HepG2 (cell line): ENCODE measurements at regions of chr9 and their contacts with region 1.

Region 1: DNA sequence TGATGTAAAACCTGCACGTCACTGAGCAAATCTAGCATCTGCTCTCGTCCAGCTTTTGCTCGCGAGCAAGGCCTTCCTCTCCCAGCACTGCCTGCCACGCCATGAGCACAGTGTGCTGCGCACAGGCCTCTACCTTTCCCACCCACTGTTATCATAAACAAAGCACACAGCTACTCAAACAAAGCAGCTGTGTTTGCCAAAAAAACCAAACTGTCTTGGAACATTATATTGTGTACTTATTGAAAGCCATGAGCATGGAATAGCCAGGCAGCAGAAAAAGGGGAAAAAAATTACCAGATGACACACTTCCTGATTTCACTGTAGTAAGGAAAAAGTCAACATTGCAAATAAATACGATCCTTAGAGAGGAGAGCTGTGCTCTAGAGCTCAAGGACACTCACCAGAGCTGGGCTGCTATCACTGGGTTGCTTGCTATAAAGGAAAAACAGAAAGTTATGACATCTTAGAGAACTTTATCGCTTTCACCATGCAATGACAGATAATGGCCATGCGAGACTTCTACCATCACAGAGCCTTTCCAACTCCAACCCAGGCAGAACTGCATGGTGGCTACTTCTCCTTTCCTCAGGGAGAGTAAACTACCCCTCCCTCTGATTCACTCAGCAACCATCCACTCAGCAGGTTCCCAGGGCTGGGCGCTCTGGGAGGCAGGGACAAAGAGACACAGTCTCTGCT is 69.6 kb downstream of the EPB41L4B start:
- DNase-seq: peak; percentile 97
- ATAC-seq: peak; percentile 89
- H3K4me3 ChIP-seq: peak overlapping the region in 2 of 3 experiments; percentile 15 to 42; a peak in 3 of 6 replicates
- H3K27ac ChIP-seq: peak overlapping the region; percentile 90
- H3K4me1 ChIP-seq: peaks cover 62% of the 10 kb centered on the region
- H3K27me3 ChIP-seq: no peaks in the 10 kb centered on the region
- CTCF ChIP-seq: no peak
- EP300 ChIP-seq: peak in 1 of 2 experiments; percentile 81; a peak in 2 of 4 replicates
- POLR2A ChIP-seq: no peak
- RAD21 ChIP-seq: 0 out of 2 replicates have a peak, but pooled peaks have one; percentile 17

Region 2: DNA sequence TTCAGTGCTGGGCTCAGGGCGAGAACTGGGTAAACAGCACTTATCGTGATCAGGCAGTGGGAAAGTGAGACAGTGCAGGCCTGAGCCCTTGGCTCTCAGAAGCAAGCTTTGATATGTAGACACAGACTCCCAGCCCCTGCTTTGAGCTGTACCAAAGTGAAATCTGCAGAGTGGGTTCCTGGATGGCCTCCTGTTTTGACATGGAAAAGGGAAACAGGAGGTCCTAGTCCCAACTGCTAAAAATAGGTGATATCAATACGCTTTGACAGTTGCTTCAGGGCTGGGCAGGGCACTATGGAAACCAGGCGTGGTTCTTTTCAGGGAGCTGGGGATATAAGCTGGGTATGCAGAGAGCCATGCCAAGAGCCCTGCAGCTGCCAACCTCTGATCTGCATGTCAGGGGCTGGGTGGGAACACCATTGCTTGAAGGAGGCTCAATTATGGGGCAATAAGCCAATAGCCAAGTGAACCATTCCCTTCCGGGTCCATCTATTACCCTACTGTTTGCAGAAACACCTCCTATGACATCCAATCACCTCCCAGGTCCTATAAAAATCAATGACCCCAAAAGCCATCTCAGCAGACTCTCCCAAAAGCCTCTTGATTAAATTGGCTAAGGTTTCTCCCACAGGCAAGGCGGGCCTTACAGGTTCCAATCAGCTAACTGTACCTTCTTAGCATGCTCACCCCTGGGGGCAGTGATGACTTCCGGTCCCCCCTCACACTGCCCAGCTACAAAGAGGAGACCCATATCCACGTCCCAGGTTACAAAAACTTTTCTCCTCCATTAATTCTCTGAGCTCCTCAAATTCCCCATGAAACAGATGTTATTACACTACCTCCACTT is 23.9 kb after region 1 on chr9:
- CTCF ChIA-PET with region 1: no interaction called
- POLR2A ChIA-PET with region 1: interaction called, 4 read pairs
- in situ Hi-C with region 1: no loop called
- intact Hi-C with region 1: loop called (anchors 2 kb)
- DNase-seq: no peak
- ATAC-seq: no peak
- H3K4me3 ChIP-seq: no peak overlapping the region
- H3K27ac ChIP-seq: no peak overlapping the region
- H3K4me1 ChIP-seq: peaks cover 34% of the 10 kb centered on the region
- H3K27me3 ChIP-seq: no peaks in the 10 kb centered on the region
- CTCF ChIP-seq: no peak
- EP300 ChIP-seq: no peak
- POLR2A ChIP-seq: no peak
- RAD21 ChIP-seq: no peak

Region 3: DNA sequence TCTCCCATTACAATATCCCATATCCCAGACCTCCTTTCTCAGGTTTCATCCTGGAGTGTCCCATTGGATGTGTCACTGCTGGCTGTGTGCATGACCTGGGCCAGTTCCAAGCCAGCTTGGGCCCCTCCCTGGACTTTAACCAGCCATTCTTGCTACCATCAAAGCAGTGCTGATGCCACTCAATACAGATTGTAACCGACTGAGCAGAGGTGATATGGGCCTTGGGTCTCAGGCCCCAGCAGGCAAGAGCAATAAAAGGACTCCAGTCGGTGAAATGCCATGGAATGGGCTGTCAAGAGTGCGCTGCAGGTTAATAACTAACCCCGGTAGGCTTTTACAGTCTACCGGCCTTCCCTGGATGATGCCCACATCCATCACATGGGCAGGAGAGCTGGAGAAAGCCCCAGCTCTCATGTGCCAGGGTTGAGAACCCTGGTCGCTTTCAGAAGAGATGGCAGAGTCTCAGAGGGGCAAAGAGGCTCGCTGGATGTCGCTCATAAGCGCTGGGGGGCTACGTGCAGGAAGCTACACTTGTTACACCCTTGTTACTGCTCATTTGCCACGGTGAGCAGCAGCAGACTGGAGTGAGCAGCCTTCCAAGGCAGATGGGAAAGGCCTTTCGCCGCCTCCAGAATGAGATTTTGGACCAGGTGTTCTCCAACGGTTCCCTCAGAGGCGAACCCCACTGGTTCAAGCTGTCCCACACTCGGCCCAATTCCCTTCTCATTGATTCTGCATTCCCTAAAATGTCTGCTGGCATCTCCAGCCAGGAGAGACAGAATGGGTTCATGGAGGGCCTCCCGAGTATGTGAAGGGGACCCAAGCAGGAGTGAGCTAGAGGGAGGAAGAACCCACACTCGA is 56.4 kb after region 1 on chr9:
- CTCF ChIA-PET with region 1: no interaction called
- POLR2A ChIA-PET with region 1: interaction called, 17 read pairs
- in situ Hi-C with region 1: no loop called
- intact Hi-C with region 1: loop called (anchors 1 kb)
- DNase-seq: peak; percentile 94
- ATAC-seq: peak; percentile 99
- H3K4me3 ChIP-seq: peak overlapping the region in 2 of 3 experiments; percentile 23 to 60; a peak in 3 of 6 replicates
- H3K27ac ChIP-seq: peak overlapping the region; percentile 76
- H3K4me1 ChIP-seq: peaks cover 84% of the 10 kb centered on the region
- H3K27me3 ChIP-seq: no peaks in the 10 kb centered on the region
- CTCF ChIP-seq: no peak
- EP300 ChIP-seq: peak in 1 of 2 experiments; percentile 81; a peak in 2 of 4 replicates
- POLR2A ChIP-seq: peak in 1 of 2 experiments; percentile 62; a peak in 2 of 4 replicates
- RAD21 ChIP-seq: 0 out of 2 replicates have a peak, but pooled peaks have one; percentile 29

Region 4: DNA sequence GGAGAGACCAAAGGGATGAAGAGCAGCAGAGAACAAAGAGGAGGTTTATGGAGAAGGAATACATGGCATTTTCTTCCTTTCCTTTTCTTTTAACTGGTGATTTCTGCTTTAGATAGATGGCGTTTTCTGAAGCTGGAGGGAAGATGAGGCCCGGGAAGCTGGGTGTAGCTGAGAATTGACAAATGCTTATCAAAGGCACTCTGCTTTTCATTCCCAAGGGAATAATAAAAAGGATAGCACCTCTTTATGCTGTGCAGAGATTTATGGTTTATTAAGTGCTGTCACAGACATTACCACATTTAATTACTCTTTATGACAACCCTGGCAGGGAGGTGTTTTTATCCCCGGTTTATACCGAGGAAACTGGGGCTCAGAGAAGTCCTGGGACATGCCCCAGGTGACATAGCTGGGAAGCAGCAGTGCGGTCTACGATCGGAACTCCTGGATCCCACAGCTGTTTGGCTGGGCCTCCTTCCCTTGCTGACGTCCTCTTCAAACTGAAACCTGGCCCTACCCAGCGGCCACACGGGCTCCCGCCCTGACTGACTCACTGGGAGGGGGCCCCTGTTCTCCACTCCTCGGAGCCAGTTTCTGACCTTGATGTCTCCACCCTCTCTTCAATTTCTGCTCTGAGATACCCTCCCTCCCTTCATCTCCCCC is 77.9 kb after region 1 on chr9:
- CTCF ChIA-PET with region 1: no interaction called
- POLR2A ChIA-PET with region 1: interaction called, 11 read pairs
- in situ Hi-C with region 1: no loop called
- intact Hi-C with region 1: no loop called
- DNase-seq: peak; percentile 27
- ATAC-seq: peak; percentile 74
- H3K4me3 ChIP-seq: peak overlapping the region; percentile 34 to 68 (median 59)
- H3K27ac ChIP-seq: no peak overlapping the region
- H3K4me1 ChIP-seq: peaks cover 52% of the 10 kb centered on the region
- H3K27me3 ChIP-seq: peaks cover 0 to 4% of the 10 kb centered on the region in 2 experiments; a peak in 2 of 5 replicates
- CTCF ChIP-seq: no peak
- EP300 ChIP-seq: no peak
- POLR2A ChIP-seq: no peak
- RAD21 ChIP-seq: no peak

Region 5: GRCh38 chr9:109422641-109423040 is 171.4 kb after region 1 on chr9:
- CTCF ChIA-PET with region 1: no interaction called
- POLR2A ChIA-PET with region 1: no interaction called
- in situ Hi-C with region 1: no loop called
- intact Hi-C with region 1: no loop called
- DNase-seq: no peak
- ATAC-seq: no peak
- H3K4me3 ChIP-seq: no peak overlapping the region
- H3K27ac ChIP-seq: no peak overlapping the region
- H3K4me1 ChIP-seq: no peaks in the 10 kb centered on the region
- H3K27me3 ChIP-seq: no peaks in the 10 kb centered on the region
- CTCF ChIP-seq: no peak
- EP300 ChIP-seq: no peak
- POLR2A ChIP-seq: no peak
- RAD21 ChIP-seq: no peak